ENCODE measurements at regions of chr14 and their contacts with region 1.

Region 1: DNA sequence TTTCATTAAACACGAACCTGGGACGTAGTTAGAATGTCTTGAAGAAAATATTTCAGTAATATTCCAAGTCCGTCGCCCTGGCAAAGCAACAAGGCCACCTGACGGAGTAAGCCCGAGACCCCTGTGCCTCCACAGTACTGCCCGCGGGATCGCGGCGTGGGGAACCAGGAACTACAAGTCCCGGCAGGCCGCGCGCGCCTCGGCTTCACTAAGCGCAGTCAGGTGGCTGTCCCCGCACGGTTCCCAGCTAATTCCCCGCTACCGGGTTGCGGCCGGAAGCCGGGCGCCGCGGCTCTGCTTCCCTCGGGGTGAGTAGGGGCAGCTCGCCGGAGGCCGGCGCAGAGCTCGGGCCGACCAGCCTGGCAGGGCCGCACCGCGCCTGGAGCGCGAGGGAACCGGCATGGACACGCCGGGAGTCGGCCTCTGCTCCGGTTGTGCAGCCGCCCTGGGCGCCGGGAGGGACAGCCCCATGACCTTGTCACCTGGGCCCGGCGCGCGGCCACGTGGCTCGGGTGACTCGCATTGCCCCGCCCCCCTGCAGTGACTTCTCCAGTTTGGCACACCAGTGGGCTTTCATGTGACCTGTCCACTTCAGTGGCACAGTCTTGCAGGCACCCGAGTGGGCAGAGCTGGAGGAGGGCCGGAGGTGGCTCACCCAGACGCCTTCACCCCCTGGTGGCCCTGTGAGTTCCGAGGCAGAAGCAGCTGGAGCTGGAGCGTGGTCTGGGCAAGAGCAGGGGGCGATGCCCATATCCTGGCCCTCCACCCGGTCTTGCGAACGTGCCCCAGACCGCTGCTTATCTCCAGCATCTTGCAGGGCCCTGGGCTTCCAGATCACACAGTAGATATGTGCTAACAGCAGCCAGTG is at the start of gene ADCK1:
- DNase-seq: peak; percentile 80
- H3K4me3 Mint-ChIP-seq: peak within 1 kb of the TSS; percentile 83
- H3K27ac Mint-ChIP-seq: peak within 1 kb of the TSS; percentile 61
- H3K4me1 Mint-ChIP-seq: peaks cover 16% of the 10 kb centered on the region
- H3K27me3 Mint-ChIP-seq: no peaks in the 10 kb centered on the region
- CTCF ChIP-seq: peak; percentile 17
- total RNA-seq, gene ADCK1: 9.1 and 10.0 TPM in 2 replicates

Region 2: DNA sequence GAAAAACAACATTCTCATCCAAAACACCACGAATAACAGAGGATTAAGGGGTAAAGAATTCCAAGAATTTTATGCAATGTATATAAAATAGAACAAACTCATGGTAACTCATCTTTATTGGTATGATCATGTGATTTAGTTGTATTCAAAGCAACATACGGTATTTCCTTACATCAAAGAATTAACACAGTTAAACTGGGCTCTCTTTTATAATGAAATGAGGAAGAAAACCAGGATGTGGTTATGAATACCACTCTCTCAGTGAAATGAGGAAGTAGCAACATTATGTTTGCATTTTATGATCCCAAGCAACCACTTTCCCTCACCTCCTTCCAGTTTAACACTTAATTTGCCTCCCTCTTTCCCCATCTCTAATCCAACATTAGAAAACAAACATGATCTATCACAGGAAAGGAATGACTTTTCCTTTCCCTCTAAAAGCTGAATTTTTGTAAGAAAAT is 206.6 kb before region 1 on chr14:
- CTCF ChIA-PET with region 1: no interaction called
- intact Hi-C with region 1: no loop called
- DNase-seq: no peak
- H3K4me3 Mint-ChIP-seq: peak overlapping the region; percentile 26
- H3K27ac Mint-ChIP-seq: peak overlapping the region; percentile 79
- H3K4me1 Mint-ChIP-seq: peaks cover 42% of the 10 kb centered on the region
- H3K27me3 Mint-ChIP-seq: no peaks in the 10 kb centered on the region
- CTCF ChIP-seq: no peak

Region 3: GRCh38 chr14:77760381-77761246 is 39.5 kb before region 1 on chr14 and contains the start of gene SNW1:
- CTCF ChIA-PET with region 1: interaction called, 6 read pairs
- intact Hi-C with region 1: loop called (anchors 5 kb)
- DNase-seq: peak; percentile 88
- H3K4me3 Mint-ChIP-seq: peak within 1 kb of the TSS; percentile 75
- H3K27ac Mint-ChIP-seq: peak within 1 kb of the TSS; percentile 80
- H3K4me1 Mint-ChIP-seq: peaks cover 17% of the 10 kb centered on the region
- H3K27me3 Mint-ChIP-seq: peaks cover 9% of the 10 kb centered on the region
- CTCF ChIP-seq: no peak
- total RNA-seq, gene SNW1: 97.8 and 102 TPM in 2 replicates

Region 4: DNA sequence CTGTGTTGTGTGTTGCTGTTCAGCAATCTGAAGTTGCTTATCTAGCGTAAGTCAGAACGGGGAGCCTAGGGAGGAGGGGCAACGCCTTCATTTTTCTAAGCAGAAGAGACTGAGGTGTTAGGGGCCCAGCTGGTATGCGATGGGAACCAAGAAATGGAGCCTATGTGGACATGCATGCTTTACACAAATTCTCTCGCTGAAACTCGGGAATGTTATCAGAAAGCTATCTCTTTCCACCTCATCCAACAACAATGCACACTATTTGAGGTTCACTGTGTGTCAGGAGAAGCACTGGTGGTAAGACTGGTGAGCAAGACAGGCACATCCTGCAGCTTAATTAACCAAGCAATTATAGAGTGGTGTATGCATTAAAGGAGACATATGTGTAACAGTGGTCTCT is 459.7 kb after region 1 on chr14:
- CTCF ChIA-PET with region 1: no interaction called
- intact Hi-C with region 1: no loop called
- DNase-seq: no peak
- H3K4me3 Mint-ChIP-seq: no peak overlapping the region
- H3K27ac Mint-ChIP-seq: no peak overlapping the region
- H3K4me1 Mint-ChIP-seq: no peaks in the 10 kb centered on the region
- H3K27me3 Mint-ChIP-seq: peaks cover 57% of the 10 kb centered on the region
- CTCF ChIP-seq: no peak

Region 5: GRCh38 chr14:78278464-78279250 is 478.6 kb after region 1 on chr14:
- CTCF ChIA-PET with region 1: no interaction called
- intact Hi-C with region 1: no loop called
- DNase-seq: no peak
- H3K4me3 Mint-ChIP-seq: no peak overlapping the region
- H3K27ac Mint-ChIP-seq: no peak overlapping the region
- H3K4me1 Mint-ChIP-seq: no peaks in the 10 kb centered on the region
- H3K27me3 Mint-ChIP-seq: peaks cover 54% of the 10 kb centered on the region
- CTCF ChIP-seq: no peak

Measured in Calu3 (cell line).